ENCODE measurements at regions of chr4 and their contacts with region 1.

Region 1: DNA sequence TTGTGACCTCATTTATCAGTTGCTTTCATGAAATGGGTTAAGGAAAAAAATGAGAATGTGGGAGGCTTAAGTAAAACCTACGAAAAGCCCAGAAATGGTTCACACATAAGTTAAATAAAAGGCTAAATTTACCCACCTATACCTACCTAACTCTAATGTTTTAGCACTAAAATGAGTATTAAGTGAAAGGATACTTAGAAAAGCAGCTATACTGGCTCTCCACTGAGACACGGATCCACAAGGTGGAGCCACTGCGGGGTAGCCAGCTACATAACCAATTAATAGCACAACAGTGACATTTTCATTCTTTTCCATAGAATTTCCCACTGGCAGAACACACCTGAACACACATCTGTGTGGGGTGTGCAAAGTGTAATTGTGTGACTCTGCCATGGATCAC is 101.9 kb downstream of the MAML3 start:
- DNase-seq: no peak
- H3K4me3 ChIP-seq: no peak overlapping the region
- H3K27me3 ChIP-seq: no peaks in the 10 kb centered on the region
- CTCF ChIP-seq: peak; percentile 73

Region 2: DNA sequence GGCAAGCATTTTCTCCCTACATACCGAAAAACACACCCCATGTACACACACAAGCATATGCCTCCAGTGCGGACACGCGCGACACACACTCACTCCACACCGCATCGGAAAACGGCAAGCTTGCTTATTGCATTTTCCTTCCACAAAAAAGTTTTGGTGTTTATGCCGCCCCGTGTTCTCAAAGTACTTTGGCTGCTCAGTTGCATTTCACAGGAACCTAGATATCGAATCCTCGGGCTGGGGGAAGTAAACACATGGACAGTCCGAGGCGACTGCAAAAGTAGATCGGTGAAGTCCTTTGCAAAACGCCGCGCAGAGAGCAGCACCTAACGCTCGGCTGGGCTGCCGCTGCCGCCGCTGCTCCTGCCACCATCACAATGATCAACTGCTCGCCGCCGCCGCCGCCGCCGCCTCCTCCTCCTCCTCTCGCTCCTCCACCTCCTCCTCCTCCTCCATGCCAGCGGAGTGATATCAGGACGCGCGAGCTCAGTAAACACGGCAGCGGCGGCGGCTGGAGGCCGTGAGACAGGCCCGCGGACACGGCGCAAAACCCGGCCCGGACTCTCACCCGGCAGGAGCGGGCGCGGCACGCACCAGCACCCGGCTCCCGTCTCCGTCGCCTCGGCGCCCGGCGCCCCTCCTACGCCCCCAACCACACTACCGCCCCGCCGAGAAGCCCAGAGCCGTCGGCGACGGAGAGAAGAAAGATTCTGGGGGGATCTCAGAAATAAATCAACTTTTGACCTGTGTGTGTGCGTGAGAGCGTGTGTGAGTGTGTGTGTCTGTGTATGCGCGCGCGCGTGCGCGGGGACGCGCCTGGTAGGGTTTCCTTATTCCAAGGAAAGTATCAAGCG is 101.9 kb after region 1 on chr4 and contains the start of gene MAML3:
- CTCF ChIA-PET with region 1: interaction called, 10 read pairs
- POLR2A ChIA-PET with region 1: no interaction called
- DNase-seq: no peak
- H3K4me3 ChIP-seq: peak within 1 kb of the TSS; percentile 66
- H3K27me3 ChIP-seq: no peaks in the 10 kb centered on the region
- CTCF ChIP-seq: no peak
- polyA plus RNA-seq, gene MAML3: 1.6 and 1.9 TPM in 2 replicates

Region 3: GRCh38 chr4:140188975-140189374 is 136.9 kb after region 1 on chr4:
- CTCF ChIA-PET with region 1: no interaction called
- POLR2A ChIA-PET with region 1: interaction called, 12 read pairs
- DNase-seq: no peak
- H3K4me3 ChIP-seq: no peak overlapping the region
- H3K27me3 ChIP-seq: peaks cover 5% of the 10 kb centered on the region; the same call in 1 of the 2 replicates
- CTCF ChIP-seq: no peak